ENCODE measurements at regions of chr11 and their contacts with region 1.

Region 1: GRCh38 chr11:117604336-117604995 is 192.6 kb downstream of the DSCAML1 start:
- DNase-seq: peak in 9 of 10 donors; percentile 51 to 92 (median 63)
- H3K4me3 ChIP-seq: peak overlapping the region in 3 of 59 donors; percentile 8 to 20 (median 17)
- H3K27ac ChIP-seq: peak overlapping the region; percentile 15 to 94 (median 86)
- H3K27me3 ChIP-seq: no peaks in the 10 kb centered on the region
- CTCF ChIP-seq: peak in 13 of 56 donors; percentile 3 to 48 (median 17)

Region 2: GRCh38 chr11:117535261-117535781 is 69.1 kb before region 1 on chr11:
- intact Hi-C with region 1: loop called (anchors 5 to 10 kb)
- DNase-seq: peak; percentile 69 to 94 (median 84)
- H3K4me3 ChIP-seq: peak overlapping the region; percentile 5 to 66 (median 42)
- H3K27ac ChIP-seq: peak overlapping the region; percentile 49 to 98 (median 93)
- H3K27me3 ChIP-seq: no peaks in the 10 kb centered on the region
- CTCF ChIP-seq: peak in 2 of 56 donors; percentile 6 to 7

Region 3: GRCh38 chr11:117663821-117664220 is 59.4 kb after region 1 on chr11:
- intact Hi-C with region 1: loop called (anchors 5 kb)
- DNase-seq: peak in 7 of 10 donors; percentile 66 to 81 (median 76)
- H3K4me3 ChIP-seq: peak overlapping the region in 33 of 59 donors; percentile 0 to 49 (median 17)
- H3K27ac ChIP-seq: peak overlapping the region; percentile 73 to 99 (median 96)
- H3K27me3 ChIP-seq: no peaks in the 10 kb centered on the region
- CTCF ChIP-seq: peak in 19 of 56 donors; percentile 7 to 47 (median 19)

Region 4: GRCh38 chr11:117678658-117679406 is 74.4 kb after region 1 on chr11:
- intact Hi-C with region 1: no loop called
- DNase-seq: peak in 8 of 10 donors; percentile 62 to 84 (median 70)
- H3K4me3 ChIP-seq: no peak overlapping the region
- H3K27ac ChIP-seq: peak overlapping the region; percentile 73 to 99 (median 96)
- H3K27me3 ChIP-seq: no peaks in the 10 kb centered on the region
- CTCF ChIP-seq: peak in 1 of 56 donors; percentile 3

Region 5: GRCh38 chr11:117717485-117718314 is 113.2 kb after region 1 on chr11:
- intact Hi-C with region 1: loop called in 1 of 2 experiments (anchors 10 kb)
- DNase-seq: peak; percentile 32 to 96 (median 92)
- H3K4me3 ChIP-seq: peak overlapping the region in 4 of 59 donors; percentile 6 to 34 (median 13)
- H3K27ac ChIP-seq: peak overlapping the region; percentile 79 to 100 (median 98)
- H3K27me3 ChIP-seq: no peaks in the 10 kb centered on the region
- CTCF ChIP-seq: peak in 6 of 56 donors; percentile 8 to 21 (median 16)

Measured in dorsolateral prefrontal cortex (tissue), 120 donors.